PC-3 (cell line): ENCODE measurements at regions of chr13 and their contacts with region 1.

Region 1: GRCh38 chr13:24160454-24161009 is at the start of gene SPATA13:
- DNase-seq: peak; percentile 87
- ATAC-seq: peak; percentile 72
- H3K4me3 ChIP-seq: peak within 1 kb of the TSS; percentile 95
- H3K27ac ChIP-seq: peak within 1 kb of the TSS; percentile 84
- H3K4me1 ChIP-seq: peaks cover 21% of the 10 kb centered on the region
- H3K27me3 ChIP-seq: no peaks in the 10 kb centered on the region
- CTCF ChIP-seq: no peak
- total RNA-seq, gene SPATA13: 43.0 and 52.6 TPM in 2 replicates

Region 2: DNA sequence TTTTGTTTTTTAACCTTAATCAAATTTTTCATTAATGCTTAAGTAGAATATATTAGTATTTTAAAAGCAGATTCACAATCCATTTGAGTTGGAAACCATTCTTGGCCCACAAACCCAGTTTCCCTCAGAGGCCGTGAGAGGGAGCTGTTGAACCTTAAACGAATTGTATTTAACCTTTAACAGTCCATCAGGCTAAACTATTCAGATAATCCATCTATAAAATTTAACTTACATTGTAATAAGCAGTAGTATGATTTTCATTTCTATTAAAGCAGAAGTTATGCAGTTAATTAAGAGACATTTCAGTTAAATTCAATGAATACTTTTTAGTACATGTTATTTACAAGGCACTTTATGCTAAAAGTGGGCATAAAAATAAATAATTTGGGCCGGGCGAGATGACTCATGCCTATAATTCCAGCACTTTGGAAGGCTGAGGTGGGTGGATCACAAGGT is 140.1 kb before region 1 on chr13:
- CTCF ChIA-PET with region 1: no interaction called
- POLR2A ChIA-PET with region 1: no interaction called
- intact Hi-C with region 1: loop called (anchors 1 kb)
- DNase-seq: peak; percentile 81
- ATAC-seq: peak; percentile 64
- H3K4me3 ChIP-seq: no peak overlapping the region
- H3K27ac ChIP-seq: no peak overlapping the region
- H3K4me1 ChIP-seq: 0 out of 2 replicates have a peak, but pooled peaks cover 4% of the 10 kb centered on the region
- H3K27me3 ChIP-seq: no peaks in the 10 kb centered on the region
- CTCF ChIP-seq: peak; percentile 92

Region 3: GRCh38 chr13:24053519-24054251 is 106.8 kb before region 1 on chr13:
- CTCF ChIA-PET with region 1: interaction called, 4 read pairs
- POLR2A ChIA-PET with region 1: no interaction called
- intact Hi-C with region 1: loop called (anchors 1 kb)
- DNase-seq: peak; percentile 91
- ATAC-seq: peak; percentile 89
- H3K4me3 ChIP-seq: 0 out of 2 replicates have a peak overlapping the region, but pooled peaks have one; percentile 0
- H3K27ac ChIP-seq: no peak overlapping the region
- H3K4me1 ChIP-seq: peaks cover 34% of the 10 kb centered on the region
- H3K27me3 ChIP-seq: no peaks in the 10 kb centered on the region
- CTCF ChIP-seq: peak; percentile 87

Region 4: DNA sequence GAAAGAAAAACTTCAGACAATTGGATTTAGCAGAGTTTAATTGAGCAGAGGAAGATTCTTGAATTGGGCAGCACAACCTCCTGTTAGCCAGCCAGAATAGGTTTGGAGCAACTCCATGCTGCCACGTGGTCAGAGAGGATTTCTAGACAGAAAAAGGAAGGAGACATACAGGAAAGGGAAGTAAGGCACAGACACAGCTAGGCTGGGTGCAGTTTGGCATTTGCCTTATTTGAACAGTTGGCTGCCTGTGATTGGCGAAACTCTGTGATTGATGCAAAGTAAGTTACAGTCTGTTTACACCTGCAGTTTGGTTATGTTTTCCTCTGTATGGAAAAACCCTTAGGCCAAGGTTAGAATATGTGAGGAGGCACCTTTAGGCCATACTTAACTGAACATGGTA is 85.8 kb before region 1 on chr13:
- CTCF ChIA-PET with region 1: no interaction called
- POLR2A ChIA-PET with region 1: interaction called, 4 read pairs
- intact Hi-C with region 1: loop called (anchors 2 kb)
- DNase-seq: peak; percentile 54
- ATAC-seq: peak; percentile 58
- H3K4me3 ChIP-seq: no peak overlapping the region
- H3K27ac ChIP-seq: peak overlapping the region; percentile 89
- H3K4me1 ChIP-seq: peaks cover 37% of the 10 kb centered on the region
- H3K27me3 ChIP-seq: no peaks in the 10 kb centered on the region
- CTCF ChIP-seq: no peak

Region 5: GRCh38 chr13:24148399-24149305 is 11.9 kb before region 1 on chr13:
- CTCF ChIA-PET with region 1: interaction called, 7 read pairs
- POLR2A ChIA-PET with region 1: interaction called, 17 read pairs
- intact Hi-C with region 1: loop called (anchors 1 kb)
- DNase-seq: peak; percentile 98
- ATAC-seq: peak; percentile 94
- H3K4me3 ChIP-seq: peak overlapping the region; percentile 28; the same call in 1 of the 2 replicates
- H3K27ac ChIP-seq: peak overlapping the region; percentile 99
- H3K4me1 ChIP-seq: peaks cover 37% of the 10 kb centered on the region
- H3K27me3 ChIP-seq: no peaks in the 10 kb centered on the region
- CTCF ChIP-seq: peak; percentile 51

Region 6: DNA sequence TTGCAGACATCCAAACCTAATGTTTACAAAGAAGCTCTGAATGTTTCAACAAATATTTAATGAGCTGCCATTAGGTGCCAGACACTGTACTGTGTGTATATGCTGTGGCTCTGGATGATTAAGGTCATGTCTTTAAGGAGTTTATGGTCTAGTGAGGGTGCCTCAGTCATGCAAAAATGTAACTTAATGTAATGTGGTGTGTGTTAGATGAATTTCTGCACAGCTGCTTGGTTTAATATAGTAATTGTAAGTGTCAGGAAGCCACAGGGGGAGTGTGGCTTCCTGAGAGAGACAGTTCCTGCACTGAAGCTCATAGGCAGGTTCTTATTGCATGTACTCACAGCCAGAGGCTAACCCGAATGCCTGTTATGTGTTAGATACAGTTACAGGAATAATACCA is 43.3 kb after region 1 on chr13:
- CTCF ChIA-PET with region 1: no interaction called
- POLR2A ChIA-PET with region 1: no interaction called
- intact Hi-C with region 1: loop called (anchors 5 kb)
- DNase-seq: peak; percentile 7
- ATAC-seq: peak; percentile 77
- H3K4me3 ChIP-seq: no peak overlapping the region
- H3K27ac ChIP-seq: no peak overlapping the region
- H3K4me1 ChIP-seq: peaks cover 25% of the 10 kb centered on the region
- H3K27me3 ChIP-seq: no peaks in the 10 kb centered on the region
- CTCF ChIP-seq: no peak

Region 7: GRCh38 chr13:24220086-24220703 is 59.7 kb after region 1 on chr13:
- CTCF ChIA-PET with region 1: interaction called, 6 read pairs
- POLR2A ChIA-PET with region 1: interaction called, 5 read pairs
- intact Hi-C with region 1: loop called (anchors 1 kb)
- DNase-seq: peak; percentile 88
- ATAC-seq: peak; percentile 83
- H3K4me3 ChIP-seq: no peak overlapping the region
- H3K27ac ChIP-seq: peak overlapping the region; percentile 71
- H3K4me1 ChIP-seq: peaks cover 40% of the 10 kb centered on the region
- H3K27me3 ChIP-seq: no peaks in the 10 kb centered on the region
- CTCF ChIP-seq: peak; percentile 86

Region 8: DNA sequence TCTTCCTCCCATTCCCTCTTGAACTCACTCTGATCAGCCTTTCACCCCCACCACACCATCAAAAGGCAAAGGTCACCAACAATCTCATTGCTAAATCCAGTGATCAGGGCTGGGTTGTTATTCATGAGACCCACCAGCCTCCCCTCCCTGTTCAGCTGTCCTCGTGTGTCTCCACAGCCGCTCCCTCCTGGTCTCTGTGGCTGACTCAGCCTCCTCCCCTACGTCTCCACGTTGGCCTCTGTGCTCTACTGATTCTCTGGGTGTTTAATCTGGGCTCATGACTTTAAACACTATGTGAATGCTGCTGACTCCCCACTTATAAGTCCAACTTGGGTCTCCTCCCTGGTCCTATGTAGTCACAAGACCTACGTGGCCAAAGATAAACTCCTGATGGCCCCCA is 313.2 kb after region 1 on chr13:
- CTCF ChIA-PET with region 1: no interaction called
- POLR2A ChIA-PET with region 1: no interaction called
- intact Hi-C with region 1: no loop called
- DNase-seq: no peak
- ATAC-seq: no peak
- H3K4me3 ChIP-seq: no peak overlapping the region
- H3K27ac ChIP-seq: no peak overlapping the region
- H3K4me1 ChIP-seq: no peaks in the 10 kb centered on the region
- H3K27me3 ChIP-seq: no peaks in the 10 kb centered on the region
- CTCF ChIP-seq: no peak